Caco-2 (cell line): ENCODE measurements at regions of chr1 and their contacts with region 1.

Region 1: DNA sequence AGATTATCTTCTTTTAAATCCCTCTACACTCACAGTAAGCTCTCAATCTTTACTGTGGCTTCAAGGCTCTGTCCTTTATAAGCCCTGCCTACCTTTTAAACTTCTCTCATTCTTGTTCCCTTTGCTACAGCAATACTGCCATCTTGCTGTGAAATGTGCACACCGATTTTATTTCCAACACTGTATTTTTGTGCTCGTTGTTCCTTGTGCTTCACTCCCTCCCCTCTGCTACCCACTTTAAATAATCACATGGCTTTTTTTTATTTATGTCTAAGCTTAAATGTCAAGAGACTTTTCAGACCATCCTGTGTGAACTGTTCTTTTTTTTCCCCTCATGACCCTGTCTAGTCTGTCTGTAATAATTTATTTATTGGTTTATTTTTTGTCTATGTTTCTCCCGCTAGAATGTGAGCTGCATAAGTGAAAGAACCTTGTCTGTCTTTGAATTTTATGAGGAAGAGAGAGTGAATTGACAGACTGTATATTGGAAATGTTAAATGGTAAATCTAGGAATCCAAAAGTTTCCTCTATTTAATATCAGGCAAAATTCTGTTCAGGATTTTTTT is 45.7 kb downstream of the ABCD3 start:
- DNase-seq: peak; percentile 39 to 56
- H3K4me3 ChIP-seq: no peak overlapping the region
- H3K4me3 Mint-ChIP-seq: peak overlapping the region; percentile 46
- H3K27ac Mint-ChIP-seq: peak overlapping the region; percentile 82
- H3K4me1 ChIP-seq: peaks cover 40% of the 10 kb centered on the region
- H3K4me1 Mint-ChIP-seq: peaks cover 29% of the 10 kb centered on the region
- H3K27me3 ChIP-seq: no peaks in the 10 kb centered on the region
- H3K27me3 Mint-ChIP-seq: no peaks in the 10 kb centered on the region
- CTCF ChIP-seq: peak; percentile 41 to 49

Region 2: GRCh38 chr1:94025383-94026340 is 438.2 kb before region 1 on chr1:
- CTCF ChIA-PET with region 1: interaction called, 9 read pairs
- POLR2A ChIA-PET with region 1: no interaction called
- intact Hi-C with region 1: loop called (anchors 5 kb)
- DNase-seq: peak in 1 of 2 experiments; percentile 45
- H3K4me3 ChIP-seq: no peak overlapping the region
- H3K4me3 Mint-ChIP-seq: no peak overlapping the region
- H3K27ac Mint-ChIP-seq: peak overlapping the region; percentile 43
- H3K4me1 ChIP-seq: peaks cover 23% of the 10 kb centered on the region
- H3K4me1 Mint-ChIP-seq: peaks cover 22% of the 10 kb centered on the region
- H3K27me3 ChIP-seq: no peaks in the 10 kb centered on the region
- H3K27me3 Mint-ChIP-seq: no peaks in the 10 kb centered on the region
- CTCF ChIP-seq: peak; percentile 43 to 51

Region 3: DNA sequence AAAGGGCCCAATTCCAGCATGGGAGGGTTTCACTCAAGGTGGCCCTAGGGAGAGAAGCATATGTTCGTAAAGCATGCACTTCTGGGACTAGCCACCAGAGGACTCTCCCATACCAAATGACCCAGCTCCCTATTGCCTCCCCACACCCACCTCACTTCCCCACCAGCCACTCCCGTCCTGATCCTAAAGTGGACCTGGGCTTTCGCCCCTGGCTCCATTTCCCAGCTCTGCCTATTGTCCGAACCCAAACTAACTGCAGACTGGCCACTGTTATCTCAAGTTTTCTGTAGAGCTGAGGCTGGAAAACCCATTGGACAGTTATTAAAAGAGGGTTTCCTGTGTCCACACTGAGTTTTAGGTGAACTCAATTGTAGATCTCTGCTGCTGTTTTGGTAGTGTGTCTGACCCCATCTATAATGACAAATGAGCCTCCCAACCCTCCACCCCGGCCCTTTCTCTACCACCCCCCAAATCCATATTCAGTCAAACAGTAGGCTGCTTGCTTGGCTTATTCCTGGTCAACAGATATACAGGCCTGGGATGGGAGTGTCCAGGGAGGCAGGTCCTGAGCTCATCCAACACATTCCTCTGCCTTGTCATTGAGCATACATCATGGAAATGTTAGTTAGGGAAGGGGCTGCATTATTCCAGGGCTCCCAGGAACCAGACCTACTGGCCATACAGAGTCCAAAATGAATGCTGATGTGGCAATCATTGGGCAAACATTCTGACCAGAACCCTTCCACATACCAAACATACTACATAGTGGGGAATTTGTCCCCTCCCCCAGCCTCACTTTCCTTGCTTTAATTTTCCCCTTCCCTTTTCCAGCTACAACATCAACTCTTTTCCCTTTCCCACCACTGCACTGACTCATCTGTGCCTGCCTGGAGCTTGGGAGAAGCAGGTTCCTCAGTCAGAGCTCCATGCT is 402.1 kb before region 1 on chr1:
- CTCF ChIA-PET with region 1: interaction called, 6 read pairs
- POLR2A ChIA-PET with region 1: no interaction called
- intact Hi-C with region 1: loop called (anchors 1 kb)
- DNase-seq: peak; percentile 81 to 86
- H3K4me3 ChIP-seq: no peak overlapping the region
- H3K4me3 Mint-ChIP-seq: no peak overlapping the region
- H3K27ac Mint-ChIP-seq: peak overlapping the region; percentile 28
- H3K4me1 ChIP-seq: peaks cover 32% of the 10 kb centered on the region
- H3K4me1 Mint-ChIP-seq: peaks cover 22% of the 10 kb centered on the region
- H3K27me3 ChIP-seq: no peaks in the 10 kb centered on the region
- H3K27me3 Mint-ChIP-seq: no peaks in the 10 kb centered on the region
- CTCF ChIP-seq: peak; percentile 72

Region 4: DNA sequence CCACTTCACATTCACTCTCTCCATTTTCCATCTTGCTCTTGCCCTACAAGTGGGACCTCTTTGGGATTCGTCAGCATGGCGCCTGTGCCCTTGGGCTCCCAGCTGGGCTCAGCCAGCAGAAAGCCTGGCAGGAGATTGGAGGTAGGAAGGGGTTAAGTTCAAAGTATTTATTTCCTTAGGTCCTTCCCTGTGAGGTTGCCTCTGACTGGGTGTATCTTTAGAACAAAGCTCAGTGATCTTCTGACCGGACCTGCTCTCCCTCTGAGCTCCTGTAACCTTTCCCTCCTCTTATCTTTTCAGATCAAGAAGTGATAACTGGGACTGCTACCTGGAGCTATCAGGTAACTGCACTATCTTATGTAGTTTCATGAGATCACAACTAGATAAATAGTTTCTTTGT is 121.4 kb before region 1 on chr1:
- CTCF ChIA-PET with region 1: interaction called, 28 read pairs
- POLR2A ChIA-PET with region 1: interaction called, 3 read pairs
- intact Hi-C with region 1: loop called (anchors 1 kb)
- DNase-seq: peak; percentile 74 to 83
- H3K4me3 ChIP-seq: no peak overlapping the region
- H3K4me3 Mint-ChIP-seq: peak overlapping the region; percentile 47
- H3K27ac Mint-ChIP-seq: peak overlapping the region; percentile 80
- H3K4me1 ChIP-seq: peaks cover 56% of the 10 kb centered on the region
- H3K4me1 Mint-ChIP-seq: peaks cover 57% of the 10 kb centered on the region
- H3K27me3 ChIP-seq: no peaks in the 10 kb centered on the region
- H3K27me3 Mint-ChIP-seq: no peaks in the 10 kb centered on the region
- CTCF ChIP-seq: no peak

Region 5: GRCh38 chr1:94383966-94384408 is 79.9 kb before region 1 on chr1:
- CTCF ChIA-PET with region 1: no interaction called
- POLR2A ChIA-PET with region 1: no interaction called
- intact Hi-C with region 1: loop called (anchors 1 kb)
- DNase-seq: peak; percentile 81 to 82
- H3K4me3 ChIP-seq: no peak overlapping the region
- H3K4me3 Mint-ChIP-seq: peak overlapping the region; percentile 63
- H3K27ac Mint-ChIP-seq: peak overlapping the region; percentile 90
- H3K4me1 ChIP-seq: peaks cover 66% of the 10 kb centered on the region
- H3K4me1 Mint-ChIP-seq: peaks cover 20% of the 10 kb centered on the region
- H3K27me3 ChIP-seq: no peaks in the 10 kb centered on the region
- H3K27me3 Mint-ChIP-seq: no peaks in the 10 kb centered on the region
- CTCF ChIP-seq: no peak

Region 6: GRCh38 chr1:94417978-94418663 is 45.7 kb before region 1 on chr1 and contains the start of gene ABCD3:
- CTCF ChIA-PET with region 1: interaction called, 7 read pairs
- POLR2A ChIA-PET with region 1: interaction called, 5 read pairs
- intact Hi-C with region 1: loop called (anchors 2 kb)
- DNase-seq: peak; percentile 95
- H3K4me3 ChIP-seq: peak within 1 kb of the TSS; percentile 87
- H3K4me3 Mint-ChIP-seq: no peak within 1 kb of the TSS
- H3K27ac Mint-ChIP-seq: peak within 1 kb of the TSS; percentile 74
- H3K4me1 ChIP-seq: peaks cover 27% of the 10 kb centered on the region
- H3K4me1 Mint-ChIP-seq: peaks cover 15% of the 10 kb centered on the region
- H3K27me3 ChIP-seq: no peaks in the 10 kb centered on the region
- H3K27me3 Mint-ChIP-seq: no peaks in the 10 kb centered on the region
- CTCF ChIP-seq: no peak
- total RNA-seq, gene ABCD3: 93.4 and 94.4 TPM in 2 replicates